GM10248 (cell line): ENCODE measurements at regions of chr20 and their contacts with region 1.

Region 1: GRCh38 chr20:1776681-1777475 is 118.3 kb upstream of the SIRPA start:
- DNase-seq: peak; percentile 84
- CTCF ChIP-seq: peak; percentile 89

Region 2: DNA sequence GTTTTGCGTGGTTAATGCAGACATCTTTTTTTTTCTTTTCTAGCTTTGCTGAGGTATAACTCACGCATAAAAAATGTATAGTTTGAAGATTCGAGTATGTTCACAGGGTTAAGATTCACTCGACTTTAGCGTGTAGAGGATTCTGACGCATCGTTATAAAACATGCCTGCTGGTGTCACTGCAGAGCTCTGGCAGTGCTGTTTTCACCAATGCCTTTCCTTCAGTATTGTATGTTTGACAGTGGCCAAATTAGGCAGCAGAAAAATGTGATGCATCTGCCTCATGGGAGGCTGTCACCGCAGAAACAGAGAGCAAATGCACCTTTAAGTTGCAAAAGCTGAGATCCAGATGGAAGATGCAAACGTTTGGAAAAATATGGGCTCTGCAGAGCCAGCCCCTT is 267.6 kb before region 1 on chr20:
- CTCF ChIA-PET with region 1: interaction called, 32 read pairs
- POLR2A ChIA-PET with region 1: no interaction called
- DNase-seq: peak; percentile 19
- CTCF ChIP-seq: peak; percentile 44

Region 3: DNA sequence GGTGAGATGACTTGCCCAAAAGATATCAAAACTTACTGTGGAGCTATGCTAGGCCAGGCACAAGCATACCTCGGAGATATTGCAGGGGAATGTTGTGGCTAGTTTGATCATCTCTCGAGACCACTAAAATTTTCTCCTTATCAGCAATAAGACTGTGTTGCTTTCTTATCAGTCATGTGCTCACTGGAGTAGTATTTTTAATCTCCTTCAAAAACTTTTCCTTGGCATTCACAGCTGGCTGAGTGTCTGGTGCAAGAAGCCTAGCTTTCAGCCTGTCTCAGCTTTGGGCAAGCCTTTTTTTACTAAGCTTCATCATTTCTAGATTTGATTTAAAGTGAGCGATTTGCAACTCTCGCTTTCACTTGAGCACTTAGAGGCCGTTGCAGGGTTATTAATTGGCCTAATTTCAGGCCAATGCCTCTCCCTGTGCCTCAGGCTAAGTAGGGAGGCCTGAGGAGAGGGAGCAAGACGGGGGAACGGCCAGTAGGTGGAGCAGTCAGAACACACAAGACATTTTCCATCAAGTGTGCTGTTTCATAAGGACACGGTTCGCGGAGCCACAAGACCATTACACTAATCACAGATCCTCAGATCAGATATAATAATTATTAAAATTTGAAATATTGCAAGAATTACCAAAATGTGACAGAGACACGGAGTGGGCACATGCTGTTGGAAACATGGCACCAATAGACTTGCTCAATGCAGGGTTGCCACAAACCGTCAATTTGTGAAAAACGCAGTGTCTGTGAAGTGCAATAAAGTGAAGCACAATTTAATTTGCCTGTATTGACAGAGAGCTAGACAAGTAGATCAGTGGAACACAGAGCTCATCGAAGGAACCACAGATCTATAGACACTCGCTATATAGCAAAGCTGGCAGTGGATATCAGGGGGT is 12.5 kb before region 1 on chr20:
- CTCF ChIA-PET with region 1: interaction called, 90 read pairs
- POLR2A ChIA-PET with region 1: no interaction called
- DNase-seq: peak; percentile 63
- CTCF ChIP-seq: peak; percentile 86

Region 4: GRCh38 chr20:1802385-1803060 is 25.6 kb after region 1 on chr20:
- CTCF ChIA-PET with region 1: interaction called, 14 read pairs
- POLR2A ChIA-PET with region 1: no interaction called
- DNase-seq: peak; percentile 70
- CTCF ChIP-seq: peak; percentile 82